Thyroid gland (tissue), 4 donors: ENCODE measurements at regions of chr17 and their contacts with region 1.

Region 1: GRCh38 chr17:29579866-29580771 is 9.3 kb downstream of the GIT1 start:
- DNase-seq: peak; percentile 90 to 92
- H3K4me3 ChIP-seq: no peak overlapping the region
- H3K27ac ChIP-seq: no peak overlapping the region
- H3K4me1 ChIP-seq: peaks cover 0 to 12% of the 10 kb centered on the region in 2 donors
- H3K27me3 ChIP-seq: no peaks in the 10 kb centered on the region
- CTCF ChIP-seq: peak; percentile 70 to 95 (median 89)
- POLR2A ChIP-seq: no peak

Region 2: GRCh38 chr17:28973425-28973824 is 606.7 kb before region 1 on chr17:
- intact Hi-C with region 1: no loop called
- DNase-seq: peak; percentile 94 to 95
- H3K4me3 ChIP-seq: no peak overlapping the region
- H3K27ac ChIP-seq: peak overlapping the region in 1 of 3 donors; percentile 15
- H3K4me1 ChIP-seq: peaks cover 0 to 28% of the 10 kb centered on the region in 2 donors
- H3K27me3 ChIP-seq: no peaks in the 10 kb centered on the region
- CTCF ChIP-seq: peak in 4 of 6 experiments; percentile 16 to 60 (median 42)
- POLR2A ChIP-seq: no peak

Region 3: DNA sequence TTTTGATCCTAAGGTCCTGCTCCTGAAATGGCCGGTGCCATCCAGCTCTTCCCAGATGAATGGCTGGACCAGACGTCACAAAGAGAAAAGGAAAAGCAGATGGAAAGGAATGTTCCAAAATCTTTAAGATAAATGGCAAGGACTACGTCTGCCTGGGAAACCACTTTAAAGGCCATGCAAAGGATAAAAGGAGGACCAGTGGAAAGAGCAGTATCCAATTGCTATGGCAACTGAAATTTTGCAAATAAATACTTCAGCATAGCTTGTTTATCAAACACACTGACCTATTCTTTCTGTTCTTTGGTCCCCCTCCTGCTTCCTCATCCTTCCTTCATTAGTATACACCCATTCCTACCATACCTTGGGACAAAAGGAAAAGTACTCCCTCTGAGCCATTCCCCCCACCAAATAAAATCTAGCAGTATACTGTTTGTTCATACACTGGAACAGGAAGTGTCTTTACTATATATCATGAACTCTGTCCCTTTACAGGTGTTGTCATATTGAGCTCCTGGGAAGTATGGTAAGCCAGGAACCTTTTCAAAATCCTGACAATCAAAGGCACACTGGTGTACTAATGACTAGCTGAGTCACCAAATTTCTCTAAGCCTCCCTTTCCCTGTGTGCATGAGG is 248.9 kb before region 1 on chr17:
- intact Hi-C with region 1: no loop called
- DNase-seq: no peak
- H3K4me3 ChIP-seq: no peak overlapping the region
- H3K27ac ChIP-seq: no peak overlapping the region
- H3K4me1 ChIP-seq: no peaks in the 10 kb centered on the region
- H3K27me3 ChIP-seq: no peaks in the 10 kb centered on the region
- CTCF ChIP-seq: no peak
- POLR2A ChIP-seq: no peak

Region 4: DNA sequence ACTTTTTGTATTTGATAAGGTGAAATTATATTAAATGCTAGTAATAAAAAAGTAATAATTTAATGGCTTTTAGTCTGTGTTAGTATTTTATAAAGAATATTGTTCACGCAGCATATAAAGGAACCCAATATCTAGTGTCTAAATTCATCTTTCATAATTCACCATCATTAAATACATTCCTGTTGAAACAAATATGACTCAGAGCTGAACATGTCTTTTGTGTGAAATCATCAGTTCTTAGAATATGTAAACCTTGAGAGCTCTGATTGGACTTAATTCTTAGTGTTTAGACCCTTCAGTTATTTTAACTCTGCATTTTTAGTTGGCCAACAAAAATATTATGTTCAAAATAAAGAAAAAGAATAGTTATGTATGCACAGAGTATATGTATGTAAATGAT is 85.1 kb before region 1 on chr17:
- intact Hi-C with region 1: no loop called
- DNase-seq: no peak
- H3K4me3 ChIP-seq: no peak overlapping the region
- H3K27ac ChIP-seq: no peak overlapping the region
- H3K4me1 ChIP-seq: no peaks in the 10 kb centered on the region
- H3K27me3 ChIP-seq: no peaks in the 10 kb centered on the region
- CTCF ChIP-seq: no peak
- POLR2A ChIP-seq: no peak

Region 5: GRCh38 chr17:29514792-29515191 is 65.3 kb before region 1 on chr17:
- intact Hi-C with region 1: no loop called
- DNase-seq: peak; percentile 56 to 60
- H3K4me3 ChIP-seq: no peak overlapping the region
- H3K27ac ChIP-seq: no peak overlapping the region
- H3K4me1 ChIP-seq: no peaks in the 10 kb centered on the region
- H3K27me3 ChIP-seq: no peaks in the 10 kb centered on the region
- CTCF ChIP-seq: no peak
- POLR2A ChIP-seq: no peak

Region 6: GRCh38 chr17:29617125-29617480 is 37.0 kb after region 1 on chr17:
- intact Hi-C with region 1: loop called (anchors 5 kb)
- DNase-seq: peak; percentile 62 to 72
- H3K4me3 ChIP-seq: no peak overlapping the region
- H3K27ac ChIP-seq: no peak overlapping the region
- H3K4me1 ChIP-seq: peaks cover 47 to 73% of the 10 kb centered on the region in 2 donors
- H3K27me3 ChIP-seq: no peaks in the 10 kb centered on the region
- CTCF ChIP-seq: peak in 5 of 6 experiments; percentile 12 to 60 (median 40)
- POLR2A ChIP-seq: peak in 1 of 2 donors; percentile 21

Region 7: GRCh38 chr17:29777663-29778062 is 197.5 kb after region 1 on chr17:
- intact Hi-C with region 1: loop called (anchors 5 kb)
- DNase-seq: no peak
- H3K4me3 ChIP-seq: no peak overlapping the region
- H3K27ac ChIP-seq: no peak overlapping the region
- H3K4me1 ChIP-seq: peaks cover 3 to 7% of the 10 kb centered on the region in 2 donors
- H3K27me3 ChIP-seq: no peaks in the 10 kb centered on the region
- CTCF ChIP-seq: no peak
- POLR2A ChIP-seq: no peak

Region 8: GRCh38 chr17:29931231-29931932 is 351.3 kb after region 1 on chr17:
- intact Hi-C with region 1: loop called (anchors 10 kb)
- DNase-seq: peak; percentile 62 to 63
- H3K4me3 ChIP-seq: no peak overlapping the region
- H3K27ac ChIP-seq: peak overlapping the region in 1 of 3 donors; percentile 96
- H3K4me1 ChIP-seq: peaks cover 27 to 28% of the 10 kb centered on the region in 2 donors
- H3K27me3 ChIP-seq: no peaks in the 10 kb centered on the region
- CTCF ChIP-seq: peak; percentile 76 to 86 (median 80)
- POLR2A ChIP-seq: no peak